Naive thymus-derived CD4-positive, alpha-beta T cell (primary cell): ENCODE measurements at regions of chr18 and their contacts with region 1.

Region 1: DNA sequence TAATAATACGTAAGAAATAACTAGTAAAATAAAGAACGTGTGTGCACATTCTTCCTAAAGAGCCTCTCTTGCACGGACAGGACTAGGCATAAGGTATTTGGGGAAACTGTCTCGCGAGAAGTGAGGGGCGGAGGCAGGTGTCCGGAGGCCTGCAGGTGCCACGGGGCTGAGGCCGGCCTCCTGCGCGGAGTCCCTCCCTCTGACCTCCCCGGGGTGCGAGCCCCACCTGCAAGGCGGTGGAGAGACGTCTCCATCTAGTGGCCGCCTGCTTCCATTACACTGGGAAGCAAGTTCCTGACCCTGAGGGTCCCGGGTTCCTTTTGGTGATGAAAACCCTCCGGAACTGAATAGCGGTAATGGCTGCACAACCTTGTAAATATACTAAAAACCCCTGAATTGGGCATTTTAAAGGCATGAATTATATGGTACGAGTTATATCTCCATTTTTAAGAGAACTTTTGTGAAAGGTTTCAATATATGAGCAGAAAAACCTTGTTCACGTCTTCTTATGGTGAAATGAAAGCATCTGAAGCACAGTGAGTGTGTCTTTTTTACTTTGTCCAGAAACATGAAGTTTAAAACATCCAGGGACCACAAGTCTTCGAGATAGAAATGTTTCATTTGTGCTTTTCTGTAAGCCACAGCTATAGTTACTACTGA is 35.5 kb upstream of the CTDP1 start:
- DNase-seq: peak; percentile 34 to 74 (median 55)
- ATAC-seq: peak; percentile 87
- H3K4me3 ChIP-seq: no peak overlapping the region
- H3K4me3 Mint-ChIP-seq: no peak overlapping the region
- H3K27ac ChIP-seq: no peak overlapping the region
- H3K27ac Mint-ChIP-seq: no peak overlapping the region
- H3K4me1 ChIP-seq: peaks cover 4 to 5% of the 10 kb centered on the region in 2 donors
- H3K4me1 Mint-ChIP-seq: peaks cover 0 to 3% (median 0%) of the 10 kb centered on the region in 7 donors
- H3K27me3 ChIP-seq: no peaks in the 10 kb centered on the region
- H3K27me3 Mint-ChIP-seq: peaks cover 4 to 13% (median 6%) of the 10 kb centered on the region in 5 donors

Region 2: GRCh38 chr18:78875268-78875997 is 768.7 kb before region 1 on chr18:
- CTCF ChIA-PET with region 1: no interaction called
- POLR2A ChIA-PET with region 1: no interaction called
- intact Hi-C with region 1: loop called in 1 of 2 experiments (anchors 5 kb)
- DNase-seq: peak in 3 of 9 donors; percentile 1 to 30 (median 9)
- ATAC-seq: peak; percentile 24
- H3K4me3 ChIP-seq: no peak overlapping the region
- H3K4me3 Mint-ChIP-seq: no peak overlapping the region
- H3K27ac ChIP-seq: no peak overlapping the region
- H3K27ac Mint-ChIP-seq: no peak overlapping the region
- H3K4me1 ChIP-seq: no peaks in the 10 kb centered on the region
- H3K4me1 Mint-ChIP-seq: peaks cover 0 to 1% (median 0%) of the 10 kb centered on the region in 7 donors
- H3K27me3 ChIP-seq: no peaks in the 10 kb centered on the region
- H3K27me3 Mint-ChIP-seq: peaks cover 4 to 25% (median 15%) of the 10 kb centered on the region in 5 donors

Region 3: DNA sequence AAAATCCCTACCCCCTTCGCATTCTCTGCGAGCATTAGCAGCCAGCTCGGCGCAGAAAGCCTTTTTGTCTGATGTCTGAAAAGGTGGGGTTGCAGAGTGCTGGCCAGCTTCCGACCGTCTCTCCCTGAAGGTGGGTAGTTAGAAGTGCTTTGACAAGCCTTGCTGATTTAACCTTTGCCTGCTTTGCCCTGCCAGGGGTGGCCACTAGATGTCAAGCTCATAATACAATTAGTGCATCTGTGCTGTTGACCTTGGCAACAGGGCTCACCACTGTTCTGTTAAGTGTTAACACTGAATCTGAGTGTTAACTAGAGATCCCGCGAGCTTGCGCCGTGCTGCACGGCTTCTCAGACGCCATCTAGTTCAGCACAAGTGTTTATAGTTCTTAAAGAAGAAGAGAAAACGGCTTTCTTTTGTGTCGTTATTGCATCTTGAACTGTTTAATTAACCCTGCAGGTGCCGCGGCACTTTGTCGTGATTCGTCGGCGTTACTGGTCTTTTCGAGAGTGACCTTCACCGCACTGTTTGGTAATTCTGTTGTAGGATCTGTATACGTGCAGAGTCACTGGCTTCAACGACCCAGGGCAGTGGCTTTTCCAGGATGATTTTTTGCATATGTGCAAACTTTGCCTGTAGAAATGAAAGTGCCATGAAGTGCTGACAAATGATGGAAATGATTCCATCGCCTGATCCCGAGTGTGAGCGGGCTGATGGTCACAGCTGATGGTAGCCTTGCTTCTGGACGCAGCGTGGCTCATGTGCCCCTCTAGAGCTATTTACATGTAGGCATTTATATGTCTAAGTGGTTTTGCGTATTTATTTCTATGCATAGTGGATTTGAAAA is 659.0 kb before region 1 on chr18:
- CTCF ChIA-PET with region 1: no interaction called
- POLR2A ChIA-PET with region 1: no interaction called
- intact Hi-C with region 1: loop called in 1 of 2 experiments (anchors 1 kb)
- DNase-seq: peak in 4 of 9 donors; percentile 3 to 24 (median 12)
- ATAC-seq: peak; percentile 56
- H3K4me3 ChIP-seq: no peak overlapping the region
- H3K4me3 Mint-ChIP-seq: peak overlapping the region in 3 of 10 donors; percentile 4 to 19 (median 17)
- H3K27ac ChIP-seq: no peak overlapping the region
- H3K27ac Mint-ChIP-seq: no peak overlapping the region
- H3K4me1 ChIP-seq: no peaks in the 10 kb centered on the region
- H3K4me1 Mint-ChIP-seq: peaks cover 5 to 23% (median 15%) of the 10 kb centered on the region in 7 donors
- H3K27me3 ChIP-seq: peaks cover 6 to 15% of the 10 kb centered on the region in 2 donors
- H3K27me3 Mint-ChIP-seq: peaks cover 61 to 76% (median 73%) of the 10 kb centered on the region in 5 donors

Region 4: GRCh38 chr18:79378542-79379250 is 265.4 kb before region 1 on chr18:
- CTCF ChIA-PET with region 1: interaction called, 16 read pairs
- POLR2A ChIA-PET with region 1: no interaction called
- intact Hi-C with region 1: loop called (anchors 1 kb)
- DNase-seq: peak; percentile 67 to 87 (median 78)
- ATAC-seq: peak; percentile 95
- H3K4me3 ChIP-seq: no peak overlapping the region
- H3K4me3 Mint-ChIP-seq: peak overlapping the region in 2 of 10 donors; percentile 11 to 50
- H3K27ac ChIP-seq: no peak overlapping the region
- H3K27ac Mint-ChIP-seq: peak overlapping the region in 7 of 9 donors; percentile 18 to 77 (median 63)
- H3K4me1 ChIP-seq: peaks cover 6 to 7% of the 10 kb centered on the region in 2 donors
- H3K4me1 Mint-ChIP-seq: peaks cover 4 to 9% (median 9%) of the 10 kb centered on the region in 7 donors
- H3K27me3 ChIP-seq: no peaks in the 10 kb centered on the region
- H3K27me3 Mint-ChIP-seq: no peaks in the 10 kb centered on the region

Region 5: DNA sequence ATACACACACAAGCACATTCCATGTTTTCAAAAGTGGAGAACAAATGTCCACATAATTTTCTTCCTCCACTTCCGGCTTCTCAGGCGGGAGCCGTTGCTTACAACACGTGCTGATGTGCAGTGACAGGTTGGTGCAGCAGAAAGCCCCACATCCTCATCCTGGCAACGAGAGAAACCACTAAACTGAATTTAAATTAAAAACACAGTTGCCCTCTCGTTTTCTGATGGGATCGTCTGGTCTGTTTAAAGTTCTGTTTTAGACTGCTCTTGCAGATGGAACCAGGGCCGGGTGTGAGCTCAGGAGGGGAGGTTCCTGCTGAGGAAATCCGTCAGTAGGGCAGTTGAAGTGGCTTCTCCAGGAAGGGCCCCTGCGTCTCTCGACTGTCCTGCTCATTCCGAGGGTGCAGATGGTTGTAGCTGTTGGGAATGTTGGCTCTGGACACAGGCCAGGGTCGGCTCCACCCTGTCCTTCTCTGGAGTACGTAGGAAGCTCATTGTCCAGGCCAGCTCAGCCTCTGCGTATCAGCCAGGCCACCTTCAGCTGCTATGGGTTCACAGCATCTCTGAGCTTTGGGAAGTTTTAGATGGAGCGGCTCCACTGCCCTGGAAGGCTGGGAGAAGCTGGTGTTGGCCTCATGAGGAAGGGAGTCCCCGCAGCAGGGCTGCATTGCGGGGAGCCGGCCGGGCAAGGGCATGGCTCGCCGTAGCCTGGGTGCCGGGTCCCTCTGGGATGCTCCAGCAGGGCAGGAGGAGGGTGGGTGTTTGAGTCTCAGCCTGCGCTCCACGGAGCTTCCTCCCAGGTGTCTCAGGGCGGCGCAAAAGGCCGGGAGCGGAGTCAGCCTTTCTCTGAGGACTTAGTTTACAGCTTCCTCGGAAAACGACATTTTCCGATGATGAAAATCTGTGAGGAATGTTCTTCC is 190.1 kb before region 1 on chr18:
- CTCF ChIA-PET with region 1: no interaction called
- POLR2A ChIA-PET with region 1: no interaction called
- intact Hi-C with region 1: no loop called
- DNase-seq: no peak
- ATAC-seq: no peak
- H3K4me3 ChIP-seq: no peak overlapping the region
- H3K4me3 Mint-ChIP-seq: no peak overlapping the region
- H3K27ac ChIP-seq: no peak overlapping the region
- H3K27ac Mint-ChIP-seq: peak overlapping the region in 4 of 9 donors; percentile 31 to 80 (median 60)
- H3K4me1 ChIP-seq: no peaks in the 10 kb centered on the region
- H3K4me1 Mint-ChIP-seq: peaks cover 0 to 10% (median 2%) of the 10 kb centered on the region in 7 donors
- H3K27me3 ChIP-seq: no peaks in the 10 kb centered on the region
- H3K27me3 Mint-ChIP-seq: no peaks in the 10 kb centered on the region

Region 6: DNA sequence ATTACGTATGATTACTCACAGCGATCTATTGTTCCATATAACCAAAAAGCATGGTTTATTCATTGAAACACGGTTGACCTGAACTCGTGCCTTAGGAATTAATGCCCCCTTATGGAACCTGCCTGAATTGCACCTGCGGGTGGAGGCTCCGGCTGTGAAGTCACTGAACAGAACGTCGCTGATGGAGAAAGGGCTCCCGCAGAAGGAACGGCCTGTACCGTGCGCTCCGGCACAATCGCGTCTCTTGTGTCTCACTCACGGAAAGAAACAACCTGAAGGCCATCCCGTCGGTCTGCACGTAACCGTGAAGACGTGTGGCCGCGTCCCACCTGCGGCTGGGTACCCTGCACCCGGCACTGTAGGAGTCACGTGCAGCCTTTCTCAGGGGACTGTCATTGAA is 115.3 kb before region 1 on chr18:
- CTCF ChIA-PET with region 1: no interaction called
- POLR2A ChIA-PET with region 1: no interaction called
- intact Hi-C with region 1: loop called in 1 of 2 experiments (anchors 1 kb)
- DNase-seq: peak; percentile 47 to 88 (median 77)
- ATAC-seq: peak; percentile 65
- H3K4me3 ChIP-seq: no peak overlapping the region
- H3K4me3 Mint-ChIP-seq: peak overlapping the region in 1 of 10 donors; percentile 6
- H3K27ac ChIP-seq: no peak overlapping the region
- H3K27ac Mint-ChIP-seq: peak overlapping the region in 6 of 9 donors; percentile 30 to 85 (median 79)
- H3K4me1 ChIP-seq: peaks cover 8 to 21% of the 10 kb centered on the region in 2 donors
- H3K4me1 Mint-ChIP-seq: peaks cover 7 to 49% (median 33%) of the 10 kb centered on the region in 7 donors
- H3K27me3 ChIP-seq: no peaks in the 10 kb centered on the region
- H3K27me3 Mint-ChIP-seq: no peaks in the 10 kb centered on the region